ENCODE measurements at regions of chr12 and their contacts with region 1.

Region 1: DNA sequence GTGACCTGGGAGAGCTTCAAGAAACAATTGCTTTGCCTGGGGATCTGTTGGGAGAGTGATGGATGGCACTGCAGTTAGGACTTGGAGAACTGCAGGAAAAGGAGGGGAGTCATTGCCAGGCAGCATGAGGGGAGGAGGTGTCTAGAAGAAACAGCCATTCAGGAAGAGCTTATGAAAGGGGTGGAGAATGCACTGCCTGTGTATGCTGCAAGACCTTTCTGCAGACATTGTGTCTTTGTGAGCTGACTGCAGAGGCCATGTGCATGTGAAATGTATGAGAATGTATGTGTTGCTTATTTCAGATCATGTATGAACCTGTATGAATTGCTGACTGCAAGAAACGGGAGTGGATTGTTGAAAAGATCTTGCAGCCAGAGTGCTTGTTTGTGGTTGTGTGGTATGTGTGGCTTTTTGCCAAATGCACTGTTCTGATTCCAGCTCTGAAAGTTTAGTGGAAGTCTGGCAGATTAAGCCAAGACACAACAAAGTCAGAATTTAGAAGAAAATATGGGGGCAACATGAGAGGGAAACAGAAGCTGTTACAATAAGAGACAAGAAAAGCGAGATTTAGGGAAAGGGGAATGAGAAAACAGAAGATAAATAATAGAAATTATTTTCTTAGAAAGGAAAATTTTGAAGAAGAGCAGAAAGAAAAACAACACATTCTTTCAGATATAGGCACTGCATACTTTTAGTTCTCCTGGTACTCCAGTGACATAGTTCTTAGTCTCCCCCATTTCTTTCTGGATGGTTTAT is 9.8 kb upstream of the RIMKLB start:
- DNase-seq: peak in 1 of 3 donors; percentile 23
- ATAC-seq: peak; percentile 58
- H3K4me3 ChIP-seq: no peak overlapping the region
- H3K4me1 ChIP-seq: peaks cover 4% of the 10 kb centered on the region
- CTCF ChIP-seq: no peak

Region 2: DNA sequence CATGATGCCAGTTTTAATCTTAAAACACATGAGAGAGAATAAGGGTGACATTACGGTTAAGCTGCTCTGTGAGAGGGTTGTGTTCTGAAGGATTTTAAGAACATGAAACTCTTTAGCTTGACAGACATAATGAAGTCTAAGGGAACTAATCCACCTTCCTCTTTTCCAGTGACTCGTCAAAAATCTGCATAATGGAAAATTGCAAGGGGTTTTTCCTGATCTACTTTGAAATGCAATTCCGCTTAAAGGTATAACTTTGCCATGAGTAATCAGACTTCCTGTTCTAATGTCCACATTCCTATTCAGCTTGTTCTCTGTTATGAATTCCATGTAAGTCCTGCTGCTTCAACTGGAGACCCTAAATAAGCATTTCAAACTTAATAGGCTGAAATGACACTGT is 531.2 kb before region 1 on chr12 and contains the start of gene ZNF705A:
- intact Hi-C with region 1: no loop called
- DNase-seq: no peak
- ATAC-seq: peak; percentile 11
- H3K4me3 ChIP-seq: no peak within 1 kb of the TSS
- H3K4me1 ChIP-seq: no peaks in the 10 kb centered on the region
- CTCF ChIP-seq: no peak
- total RNA-seq, gene ZNF705A: not detected

Region 3: GRCh38 chr12:8554451-8555195 is 133.4 kb before region 1 on chr12:
- intact Hi-C with region 1: no loop called
- DNase-seq: no peak
- ATAC-seq: no peak
- H3K4me3 ChIP-seq: no peak overlapping the region
- H3K4me1 ChIP-seq: no peaks in the 10 kb centered on the region
- CTCF ChIP-seq: no peak

Region 4: DNA sequence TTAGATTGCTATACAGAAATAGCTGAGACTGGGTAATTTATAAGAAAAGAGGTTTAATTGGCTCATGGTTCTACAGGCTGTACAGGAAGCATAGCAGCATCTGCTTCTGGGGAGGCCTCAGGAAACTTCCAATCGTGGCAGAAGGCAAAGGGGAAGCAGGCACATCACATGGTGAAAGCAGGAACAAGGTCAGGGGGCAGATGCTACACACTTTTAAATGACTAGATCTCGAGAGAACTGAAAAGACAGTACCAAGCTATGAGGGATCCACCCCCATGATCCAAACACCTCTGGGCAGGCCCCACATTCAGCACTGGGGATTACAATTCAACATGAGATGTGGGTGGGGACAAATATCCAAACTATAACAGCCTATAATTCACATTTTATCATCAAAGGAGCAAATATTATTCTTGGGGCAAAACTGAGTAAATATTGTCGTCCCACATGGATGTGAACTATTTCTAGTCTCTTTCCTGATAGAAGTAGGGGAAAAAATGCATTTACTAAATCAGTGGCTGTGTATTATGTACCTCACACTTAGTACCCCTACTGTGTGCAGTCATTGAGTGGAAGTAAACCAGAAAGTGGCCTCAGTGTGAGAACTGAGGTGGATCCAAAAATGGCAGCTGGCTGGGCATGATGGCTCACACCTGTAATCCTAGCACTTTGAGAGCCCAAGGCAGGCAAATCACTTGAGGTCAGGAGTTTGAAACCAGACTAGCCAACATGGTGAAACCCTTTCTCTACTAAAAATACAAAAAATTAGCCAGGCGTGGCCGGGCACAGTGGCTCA is 109.0 kb after region 1 on chr12:
- intact Hi-C with region 1: no loop called
- DNase-seq: no peak
- ATAC-seq: no peak
- H3K4me3 ChIP-seq: no peak overlapping the region
- H3K4me1 ChIP-seq: no peaks in the 10 kb centered on the region
- CTCF ChIP-seq: no peak

Region 5: DNA sequence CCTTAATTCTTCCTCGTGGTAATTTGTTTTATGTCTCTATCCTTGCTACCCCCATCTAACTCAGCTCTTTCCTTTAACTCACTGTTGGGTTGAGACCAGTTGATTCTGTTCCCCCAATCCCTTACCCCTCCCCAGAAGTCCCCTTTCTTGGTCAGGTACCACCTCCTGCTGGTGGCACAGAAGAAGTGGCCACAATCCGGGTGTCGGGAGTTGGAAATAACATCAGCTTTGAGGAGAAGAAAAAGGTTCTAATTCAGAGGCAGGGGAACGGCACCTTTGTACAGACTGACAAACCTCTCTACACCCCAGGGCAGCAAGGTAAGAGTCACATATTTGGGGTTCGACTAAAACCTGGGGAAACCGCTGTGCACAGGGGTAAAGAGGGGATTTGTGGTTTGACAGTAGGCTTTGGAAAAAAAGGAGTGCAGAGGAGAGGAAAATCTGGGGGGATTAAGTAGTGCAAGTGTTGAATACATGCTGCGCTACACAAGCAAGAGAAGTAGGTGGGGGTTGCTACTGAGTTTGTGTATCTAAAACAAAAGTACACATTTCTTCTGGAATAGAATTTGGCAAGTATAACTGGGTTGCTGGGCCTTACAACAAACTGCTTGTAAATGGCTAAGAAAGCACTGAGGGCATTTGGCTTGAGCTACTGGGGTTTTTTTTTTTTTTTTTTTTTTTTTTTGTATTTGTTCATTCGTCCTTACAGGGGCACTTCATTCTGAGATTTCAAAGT is 135.7 kb after region 1 on chr12:
- intact Hi-C with region 1: loop called (anchors 5 to 10 kb)
- DNase-seq: no peak
- ATAC-seq: no peak
- H3K4me3 ChIP-seq: no peak overlapping the region
- H3K4me1 ChIP-seq: no peaks in the 10 kb centered on the region
- CTCF ChIP-seq: no peak

Region 6: GRCh38 chr12:8890313-8891085 is 202.5 kb after region 1 on chr12:
- intact Hi-C with region 1: loop called in 1 of 2 experiments (anchors 10 kb)
- DNase-seq: peak in 1 of 3 donors; percentile 62
- ATAC-seq: peak; percentile 72
- H3K4me3 ChIP-seq: no peak overlapping the region
- H3K4me1 ChIP-seq: no peaks in the 10 kb centered on the region
- CTCF ChIP-seq: peak; percentile 73

Measured in mucosa of descending colon (tissue), 3 donors.